ENCODE measurements at regions of chr18 and their contacts with region 1.

Region 1: GRCh38 chr18:80157708-80158343 is 48.8 kb downstream of the ADNP2 start:
- DNase-seq: peak; percentile 71 to 78
- H3K4me3 ChIP-seq: no peak overlapping the region
- H3K27ac ChIP-seq: no peak overlapping the region
- H3K4me1 ChIP-seq: no peaks in the 10 kb centered on the region
- H3K27me3 ChIP-seq: no peaks in the 10 kb centered on the region
- CTCF ChIP-seq: peak; percentile 86 to 90 (median 87)
- POLR2A ChIP-seq: no peak

Region 2: DNA sequence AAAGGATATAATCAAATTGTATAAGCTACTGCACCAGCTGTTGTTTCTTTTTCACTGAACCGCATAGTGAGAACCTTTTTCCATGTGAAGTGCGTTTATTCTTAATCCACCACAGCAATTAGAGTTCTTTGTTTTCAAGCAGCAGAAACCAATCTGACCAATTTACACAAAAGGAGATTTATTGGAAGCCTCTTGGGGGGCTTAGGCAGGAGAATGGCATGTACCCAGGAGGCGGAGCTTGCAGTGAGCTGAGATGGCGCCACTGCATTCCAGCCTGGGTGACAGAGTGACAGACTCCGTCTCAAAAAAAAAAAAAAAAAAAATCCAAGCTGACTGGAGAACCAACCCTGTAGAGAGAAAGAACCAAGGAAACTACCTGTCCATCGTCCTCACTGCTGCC is 38.7 kb before region 1 on chr18:
- intact Hi-C with region 1: loop called (anchors 2 kb)
- DNase-seq: no peak
- H3K4me3 ChIP-seq: no peak overlapping the region
- H3K27ac ChIP-seq: no peak overlapping the region
- H3K4me1 ChIP-seq: no peaks in the 10 kb centered on the region
- H3K27me3 ChIP-seq: no peaks in the 10 kb centered on the region
- CTCF ChIP-seq: no peak
- POLR2A ChIP-seq: no peak